ENCODE measurements at regions of chr2 and their contacts with region 1.

Region 1: DNA sequence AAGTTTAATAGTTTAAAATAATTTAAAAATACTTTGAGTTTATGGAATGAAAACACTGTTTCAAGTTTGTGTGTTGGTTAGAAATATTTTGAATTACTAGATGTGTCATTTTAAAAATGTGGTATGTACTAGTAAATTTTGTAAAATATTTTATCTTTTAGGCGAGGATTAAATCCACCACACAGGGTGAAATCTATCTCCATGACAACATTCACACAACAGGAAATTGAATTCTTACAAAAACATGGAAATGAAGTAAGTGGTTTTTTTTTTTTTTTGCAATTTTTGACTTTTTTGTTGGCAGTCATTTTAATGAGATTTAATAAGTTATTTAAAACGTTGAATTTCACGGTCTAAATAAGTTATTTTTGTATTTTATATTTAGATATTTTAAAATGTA is 19.4 kb downstream of the AGFG1 start:
- DNase-seq: no peak
- ATAC-seq: no peak
- H3K4me3 ChIP-seq: no peak overlapping the region
- H3K27ac ChIP-seq: no peak overlapping the region
- H3K4me1 ChIP-seq: 0 out of 2 replicates have a peak, but pooled peaks cover 5% of the 10 kb centered on the region
- H3K27me3 ChIP-seq: no peaks in the 10 kb centered on the region
- CTCF ChIP-seq: no peak
- EP300 ChIP-seq: no peak
- POLR2A ChIP-seq: no peak
- RAD21 ChIP-seq: no peak

Region 2: DNA sequence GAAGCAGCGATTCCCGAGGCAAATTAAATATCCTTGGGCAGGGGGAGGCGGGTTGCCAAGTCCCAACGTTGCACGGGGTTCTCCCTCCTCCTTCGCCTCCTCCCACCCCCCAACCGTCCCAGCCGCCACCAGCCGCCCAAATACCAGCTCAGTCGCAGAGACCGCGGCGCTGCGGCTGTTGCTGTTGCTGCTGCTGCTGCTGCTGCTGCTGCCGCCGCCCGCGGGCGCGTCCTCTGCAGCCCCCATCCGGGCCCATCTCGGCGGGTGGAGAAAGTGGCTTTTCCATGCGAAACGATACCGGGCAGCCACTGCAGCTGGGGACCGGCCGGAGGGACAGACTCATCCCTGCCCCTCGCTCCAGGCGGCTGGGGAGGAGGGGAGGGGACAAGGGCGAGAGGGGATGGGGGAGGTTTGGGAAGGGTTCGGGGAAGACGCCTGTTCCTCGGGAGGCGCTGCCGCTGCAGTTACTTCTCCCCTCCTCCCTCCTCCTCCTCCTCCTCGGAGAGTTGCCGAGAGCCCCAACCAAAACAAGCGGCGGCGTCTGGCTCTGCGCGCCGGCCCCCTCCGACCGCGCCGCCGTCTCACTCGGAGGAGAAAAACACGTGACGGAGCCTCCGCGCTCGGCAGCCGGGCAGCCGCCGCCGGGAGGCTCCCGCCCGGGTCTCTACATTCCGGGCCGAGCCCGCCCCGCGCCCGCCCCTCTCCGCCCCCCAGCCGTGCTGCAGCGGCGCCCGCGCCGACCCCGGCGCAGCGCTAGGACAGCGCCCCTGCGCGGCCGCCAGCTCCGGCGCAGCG is 692.0 kb before region 1 on chr2 and contains the start of gene IRS1:
- CTCF ChIA-PET with region 1: no interaction called
- POLR2A ChIA-PET with region 1: no interaction called
- RAD21 ChIA-PET with region 1: no interaction called
- SMC1A ChIA-PET with region 1: no interaction called
- in situ Hi-C with region 1: no loop called
- intact Hi-C with region 1: no loop called
- DNase-seq: no peak
- ATAC-seq: peak; percentile 53
- H3K4me3 ChIP-seq: peak within 1 kb of the TSS; percentile 93
- H3K27ac ChIP-seq: no peak within 1 kb of the TSS
- H3K4me1 ChIP-seq: peaks cover 8% of the 10 kb centered on the region
- H3K27me3 ChIP-seq: no peaks in the 10 kb centered on the region
- CTCF ChIP-seq: peak in 2 of 3 experiments; percentile 1 to 37; a peak in 2 of 6 replicates
- EP300 ChIP-seq: no peak
- POLR2A ChIP-seq: 0 out of 2 replicates have a peak, but pooled peaks have one; percentile 17
- RAD21 ChIP-seq: peak; percentile 56
- polyA plus RNA-seq, gene IRS1: 0.03 to 0.13 TPM

Region 3: DNA sequence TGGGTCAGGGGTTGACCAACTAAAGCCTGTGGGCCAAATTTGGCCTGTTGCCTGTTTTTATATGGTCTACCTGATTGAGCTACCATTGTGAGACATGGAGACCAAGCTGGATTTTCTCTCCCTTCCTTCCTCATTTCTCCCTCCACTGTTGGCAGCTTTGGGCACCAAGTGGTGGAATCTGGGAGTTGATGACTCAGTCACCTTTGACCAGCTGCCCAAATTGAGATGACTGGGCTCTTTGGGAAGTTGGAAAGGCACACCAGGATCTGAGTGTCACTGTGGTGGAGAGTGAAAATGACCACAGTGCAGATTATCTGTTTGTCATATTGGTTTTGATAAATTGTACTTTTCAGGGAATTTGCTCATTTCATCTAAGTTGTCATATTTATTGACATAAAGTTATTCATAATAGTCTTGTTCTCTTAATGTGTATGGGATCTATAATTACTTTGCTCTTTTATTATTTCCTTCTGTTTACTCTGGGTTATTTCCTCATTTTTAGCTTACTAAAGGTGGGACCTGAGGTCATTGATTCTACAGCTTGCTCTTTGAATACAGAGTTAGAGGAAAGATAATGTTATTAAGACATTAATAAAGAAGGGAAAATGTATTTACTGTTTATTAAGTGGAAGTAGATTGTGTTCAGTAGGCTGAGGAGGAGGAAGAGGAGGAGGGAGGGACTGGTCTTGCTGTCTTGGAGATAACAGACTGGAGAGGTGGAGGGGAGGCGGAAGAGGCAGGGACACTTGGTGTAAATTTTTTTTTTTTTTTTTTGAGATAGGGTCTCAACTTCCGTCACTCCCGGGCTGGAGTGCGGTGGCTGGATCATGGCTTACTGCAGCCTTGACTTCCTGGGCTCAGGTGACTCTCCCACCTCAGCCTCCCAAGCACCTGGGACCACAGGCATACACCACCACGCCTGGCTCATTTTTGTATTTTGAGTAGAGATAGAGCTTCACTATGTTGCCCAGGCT is 12.3 kb after region 1 on chr2:
- CTCF ChIA-PET with region 1: interaction called, 5 read pairs
- POLR2A ChIA-PET with region 1: interaction called, 4 read pairs
- RAD21 ChIA-PET with region 1: interaction called, 3 read pairs
- SMC1A ChIA-PET with region 1: interaction called, 21 read pairs
- in situ Hi-C with region 1: no loop called
- intact Hi-C with region 1: no loop called
- DNase-seq: no peak
- ATAC-seq: no peak
- H3K4me3 ChIP-seq: no peak overlapping the region
- H3K27ac ChIP-seq: no peak overlapping the region
- H3K4me1 ChIP-seq: peaks cover 10% of the 10 kb centered on the region; the same call in 1 of the 2 replicates
- H3K27me3 ChIP-seq: no peaks in the 10 kb centered on the region
- CTCF ChIP-seq: no peak
- EP300 ChIP-seq: no peak
- POLR2A ChIP-seq: no peak
- RAD21 ChIP-seq: no peak